Sigmoid colon (tissue), 7 donors: ENCODE measurements at regions of chr1 and their contacts with region 1.

Region 1: DNA sequence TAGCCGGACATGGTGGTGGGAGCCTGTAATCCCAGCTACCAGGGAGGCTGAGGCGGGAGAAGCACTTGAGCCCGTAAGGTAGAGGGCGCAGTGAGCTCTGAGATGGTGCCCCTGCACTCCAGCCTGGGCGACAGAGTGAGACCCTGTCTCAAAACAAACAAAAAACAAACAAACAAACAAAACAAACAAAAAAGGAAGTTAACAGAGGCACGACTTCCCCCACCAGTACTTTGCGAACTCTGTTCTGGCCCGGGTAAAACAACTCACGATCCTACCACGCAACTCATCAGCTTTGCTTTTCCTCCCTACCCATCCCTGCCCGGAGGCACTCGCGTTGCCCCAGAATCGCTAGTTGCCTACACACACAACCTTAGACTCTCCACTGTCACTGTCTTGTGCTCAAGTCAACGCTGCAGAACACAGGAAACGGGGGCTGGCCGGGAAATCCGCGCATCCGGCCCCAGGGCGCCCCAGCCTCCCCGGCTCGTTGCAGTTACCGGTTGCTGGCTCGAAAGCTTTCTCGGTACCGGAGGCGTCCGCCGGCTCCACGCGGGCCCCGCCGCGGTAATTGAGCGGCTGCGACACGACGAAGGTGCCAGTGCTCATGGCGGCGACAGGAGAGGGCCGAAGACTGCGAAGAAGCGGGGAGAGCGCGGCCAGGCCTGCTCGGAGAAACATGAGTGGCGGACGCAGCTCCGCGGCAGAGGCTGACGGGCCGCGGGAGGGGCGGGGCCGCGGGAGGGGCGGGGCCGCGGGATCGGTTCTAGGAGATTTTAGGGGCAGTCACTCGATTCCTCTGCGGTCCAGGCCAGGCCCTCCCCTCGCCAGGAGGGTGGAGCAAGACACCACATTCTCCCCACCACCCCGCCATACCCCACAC is at the start of gene ALDH9A1:
- DNase-seq: peak; percentile 95
- H3K4me3 ChIP-seq: peak within 1 kb of the TSS; percentile 66 to 79 (median 70)
- H3K27ac ChIP-seq: peak within 1 kb of the TSS; percentile 91 to 97 (median 94)
- H3K4me1 ChIP-seq: peaks cover 0 to 32% (median 23%) of the 10 kb centered on the region in 4 donors
- H3K27me3 ChIP-seq: no peaks in the 10 kb centered on the region
- CTCF ChIP-seq: peak in 3 of 4 experiments; percentile 12 to 46 (median 36)
- EP300 ChIP-seq: no peak
- POLR2A ChIP-seq: peak; percentile 64 to 78
- total RNA-seq, gene ALDH9A1: 59.4 to 98.5 (median 86.9) TPM

Region 2: GRCh38 chr1:165630629-165631341 is 67.3 kb before region 1 on chr1 and contains the start of gene MGST3:
- intact Hi-C with region 1: loop called (anchors 2 kb)
- DNase-seq: peak; percentile 97
- H3K4me3 ChIP-seq: peak within 1 kb of the TSS; percentile 55 to 88 (median 74)
- H3K27ac ChIP-seq: peak within 1 kb of the TSS; percentile 81 to 93 (median 90)
- H3K4me1 ChIP-seq: peaks cover 0 to 46% (median 40%) of the 10 kb centered on the region in 4 donors
- H3K27me3 ChIP-seq: no peaks in the 10 kb centered on the region
- CTCF ChIP-seq: no peak
- EP300 ChIP-seq: no peak
- POLR2A ChIP-seq: peak; percentile 78 to 81
- total RNA-seq, gene MGST3: 162 to 269 (median 201) TPM

Region 3: DNA sequence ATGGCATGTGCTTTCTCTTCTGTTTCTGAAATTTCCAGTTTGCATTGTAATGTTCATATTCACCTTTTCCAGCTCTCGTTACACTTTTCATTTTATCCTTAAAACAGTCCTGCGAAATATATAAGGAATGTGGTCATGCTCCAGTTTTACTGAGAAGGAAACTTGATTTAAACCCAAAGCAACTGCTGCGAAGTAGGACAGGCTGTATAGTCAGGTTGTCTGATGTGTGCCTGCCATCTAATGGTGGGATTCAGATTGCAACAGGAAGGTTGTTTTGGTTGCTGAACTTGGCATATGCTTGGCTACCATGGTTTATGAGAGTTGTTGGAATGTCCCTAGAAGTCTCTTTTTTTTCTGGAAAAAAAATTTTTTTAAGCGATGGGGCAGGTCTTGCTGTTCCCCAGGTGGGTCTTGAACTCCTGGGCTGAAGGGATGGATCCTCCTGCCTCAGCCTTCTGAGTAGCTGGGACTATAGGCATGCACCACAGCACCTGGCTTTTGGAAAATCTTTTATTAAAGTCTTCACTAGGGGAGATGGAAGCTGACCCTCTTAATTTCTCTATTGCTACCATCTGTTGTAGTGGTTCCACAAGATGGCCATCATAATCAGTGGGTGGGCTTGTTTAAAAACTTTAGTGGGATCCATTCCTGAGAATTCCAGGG is 216.1 kb after region 1 on chr1:
- intact Hi-C with region 1: loop called (anchors 1 kb)
- DNase-seq: peak; percentile 69
- H3K4me3 ChIP-seq: no peak overlapping the region
- H3K27ac ChIP-seq: no peak overlapping the region
- H3K4me1 ChIP-seq: peaks cover 0 to 6% (median 0%) of the 10 kb centered on the region in 4 donors
- H3K27me3 ChIP-seq: no peaks in the 10 kb centered on the region
- CTCF ChIP-seq: peak; percentile 78 to 89 (median 88)
- EP300 ChIP-seq: no peak
- POLR2A ChIP-seq: no peak